ENCODE measurements at regions of chr21 and their contacts with region 1.

Region 1: GRCh38 chr21:32520875-32521735 is 64.2 kb downstream of the TCP10L start:
- DNase-seq: peak; percentile 98
- H3K4me3 ChIP-seq: no peak overlapping the region
- H3K27ac ChIP-seq: peak overlapping the region; percentile 100
- H3K4me1 ChIP-seq: peaks cover 71% of the 10 kb centered on the region
- H3K27me3 ChIP-seq: no peaks in the 10 kb centered on the region
- CTCF ChIP-seq: no peak
- POLR2A ChIP-seq: peak; percentile 59

Region 2: DNA sequence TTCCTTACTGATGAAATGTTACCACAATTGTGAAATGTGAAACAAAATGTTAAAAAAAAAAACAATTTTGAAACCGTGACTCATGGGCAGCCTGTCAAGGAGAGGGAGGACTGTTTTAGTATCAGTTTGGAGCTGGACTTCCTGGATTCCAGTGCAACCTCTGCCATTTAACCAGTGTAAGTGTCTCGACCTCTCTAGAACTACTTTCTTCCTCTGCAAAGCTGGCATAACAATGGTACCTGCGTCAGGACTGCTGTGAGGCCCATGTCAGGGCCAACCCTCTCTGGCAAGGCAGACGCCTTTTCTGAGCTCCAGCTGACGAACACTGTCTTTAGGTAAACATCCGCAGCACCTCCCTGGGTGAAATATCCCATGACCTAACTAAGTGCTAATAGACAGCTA is 149.2 kb before region 1 on chr21:
- CTCF ChIA-PET with region 1: interaction called, 3 read pairs
- POLR2A ChIA-PET with region 1: no interaction called
- dilution Hi-C with region 1: no loop called
- intact Hi-C with region 1: loop called (anchors 1 kb)
- DNase-seq: peak; percentile 98
- H3K4me3 ChIP-seq: no peak overlapping the region
- H3K27ac ChIP-seq: peak overlapping the region; percentile 93
- H3K4me1 ChIP-seq: peaks cover 29% of the 10 kb centered on the region
- H3K27me3 ChIP-seq: no peaks in the 10 kb centered on the region
- CTCF ChIP-seq: no peak
- POLR2A ChIP-seq: peak; percentile 43

Region 3: DNA sequence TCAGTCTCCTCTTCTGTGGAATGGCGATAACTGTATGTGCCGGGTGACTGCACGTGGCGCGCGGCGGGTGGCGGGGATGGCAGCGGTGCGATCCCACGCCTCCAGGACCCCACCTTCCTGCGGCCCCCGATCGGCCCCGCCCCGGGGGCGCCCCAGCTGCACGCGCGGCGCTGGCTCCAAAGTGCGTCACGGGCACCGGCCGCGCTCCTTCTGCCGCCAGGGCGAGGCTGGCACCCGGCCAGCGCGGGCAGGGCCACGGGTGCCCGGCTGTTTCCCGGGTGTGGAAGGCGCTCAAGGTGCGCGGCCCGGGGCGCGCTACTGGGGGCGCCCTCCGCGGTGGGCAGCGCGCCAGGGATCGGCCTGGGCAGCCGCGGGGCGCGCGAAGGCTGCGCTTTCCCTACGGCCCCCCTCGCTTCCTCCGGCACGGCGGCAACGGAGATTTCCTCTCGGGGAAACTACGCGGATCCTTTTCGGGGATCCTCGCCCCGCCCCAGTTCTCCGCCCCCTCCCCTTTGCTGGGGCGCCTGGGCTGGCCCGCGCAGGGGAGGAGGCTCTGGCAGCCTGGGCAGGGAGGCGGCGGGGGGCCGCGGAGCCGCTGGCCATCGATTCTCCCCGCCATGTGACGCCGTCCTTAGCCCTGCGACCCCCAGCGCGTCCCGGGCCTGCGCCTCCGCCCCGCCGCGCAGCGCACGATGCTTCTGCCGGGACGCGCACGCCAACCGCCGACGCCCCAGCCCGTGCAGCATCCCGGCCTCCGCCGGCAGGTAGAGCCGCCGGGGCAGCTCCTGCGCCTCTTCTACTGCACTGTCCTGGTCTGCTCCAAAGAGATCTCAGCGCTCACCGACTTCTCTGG is 108.7 kb before region 1 on chr21 and contains the start of gene EVA1C:
- CTCF ChIA-PET with region 1: interaction called, 35 read pairs
- POLR2A ChIA-PET with region 1: no interaction called
- dilution Hi-C with region 1: no loop called
- intact Hi-C with region 1: loop called (anchors 1 kb)
- DNase-seq: peak; percentile 69
- H3K4me3 ChIP-seq: peak within 1 kb of the TSS; percentile 46 to 81 (median 73)
- H3K27ac ChIP-seq: peak within 1 kb of the TSS; percentile 99
- H3K4me1 ChIP-seq: peaks cover 35% of the 10 kb centered on the region
- H3K27me3 ChIP-seq: no peaks in the 10 kb centered on the region
- CTCF ChIP-seq: peak in 1 of 2 donors; percentile 11
- POLR2A ChIP-seq: no peak
- total RNA-seq, gene EVA1C: 31.7 and 38.6 TPM in 2 replicates

Region 4: GRCh38 chr21:32475164-32475812 is 45.8 kb before region 1 on chr21:
- CTCF ChIA-PET with region 1: interaction called, 6 read pairs
- POLR2A ChIA-PET with region 1: interaction called, 3 read pairs
- dilution Hi-C with region 1: no loop called
- intact Hi-C with region 1: loop called (anchors 1 kb)
- DNase-seq: peak; percentile 86
- H3K4me3 ChIP-seq: peak overlapping the region in 1 of 3 experiments; percentile 36
- H3K27ac ChIP-seq: peak overlapping the region; percentile 66
- H3K4me1 ChIP-seq: peaks cover 46% of the 10 kb centered on the region
- H3K27me3 ChIP-seq: no peaks in the 10 kb centered on the region
- CTCF ChIP-seq: no peak
- POLR2A ChIP-seq: no peak

Region 5: GRCh38 chr21:32545948-32546441 is 24.9 kb after region 1 on chr21:
- CTCF ChIA-PET with region 1: interaction called, 5 read pairs
- POLR2A ChIA-PET with region 1: interaction called, 4 read pairs
- dilution Hi-C with region 1: no loop called
- intact Hi-C with region 1: loop called (anchors 1 kb)
- DNase-seq: peak; percentile 38
- H3K4me3 ChIP-seq: no peak overlapping the region
- H3K27ac ChIP-seq: peak overlapping the region; percentile 96
- H3K4me1 ChIP-seq: peaks cover 22% of the 10 kb centered on the region
- H3K27me3 ChIP-seq: no peaks in the 10 kb centered on the region
- CTCF ChIP-seq: no peak
- POLR2A ChIP-seq: no peak

Region 6: GRCh38 chr21:32569261-32570230 is 48.4 kb after region 1 on chr21:
- CTCF ChIA-PET with region 1: interaction called, 12 read pairs
- POLR2A ChIA-PET with region 1: interaction called, 3 read pairs
- dilution Hi-C with region 1: no loop called
- intact Hi-C with region 1: loop called (anchors 1 kb)
- DNase-seq: peak; percentile 87
- H3K4me3 ChIP-seq: peak overlapping the region; percentile 38 to 71 (median 62)
- H3K27ac ChIP-seq: peak overlapping the region; percentile 79
- H3K4me1 ChIP-seq: peaks cover 11% of the 10 kb centered on the region
- H3K27me3 ChIP-seq: no peaks in the 10 kb centered on the region
- CTCF ChIP-seq: peak; percentile 85 to 90
- POLR2A ChIP-seq: peak; percentile 66

Region 7: DNA sequence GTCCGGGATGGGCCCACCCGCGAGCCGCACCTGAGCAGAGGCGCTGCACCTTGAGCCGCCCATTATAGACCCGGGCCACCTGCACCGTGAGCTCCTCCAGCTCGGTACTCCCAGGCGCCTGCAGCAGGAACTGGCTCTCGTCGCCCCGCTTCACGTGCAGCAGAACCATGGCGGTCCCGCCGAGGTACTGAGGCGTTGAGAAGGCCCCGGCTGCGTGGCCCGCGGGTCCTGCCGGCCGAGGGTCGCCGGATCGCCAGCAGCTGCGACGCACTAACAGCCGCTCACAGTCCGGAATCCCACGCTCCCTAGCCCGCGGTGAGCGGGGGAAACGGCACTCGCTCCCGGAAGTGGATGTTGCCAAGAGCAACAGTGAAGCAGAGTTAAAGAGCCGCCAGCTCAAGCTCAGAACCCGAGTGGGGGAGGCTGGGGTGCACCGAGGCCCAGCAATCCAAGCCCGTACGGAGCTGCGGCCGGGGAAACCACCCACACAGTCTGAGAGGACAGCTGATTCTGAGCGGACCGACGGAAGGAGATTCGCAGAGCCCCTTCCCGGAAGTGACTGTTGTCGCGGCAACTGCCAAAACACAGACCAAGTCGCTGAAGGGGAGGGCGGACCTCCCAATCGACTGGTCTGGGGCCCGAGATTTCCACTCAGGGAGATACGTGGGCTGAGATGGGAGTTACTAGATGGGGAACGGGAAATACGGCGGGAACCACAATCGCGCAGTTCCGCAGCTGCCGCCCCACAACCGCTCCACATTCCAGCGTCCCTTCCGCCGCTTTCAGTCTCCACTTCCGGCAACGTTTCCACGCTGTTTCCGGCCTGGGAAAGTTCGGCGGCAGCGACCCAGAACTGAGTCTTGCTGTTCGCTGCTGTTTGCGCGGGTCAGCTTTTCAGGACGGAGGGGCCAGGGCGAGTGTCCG is 91.2 kb after region 1 on chr21 and contains the start of gene CFAP298:
- CTCF ChIA-PET with region 1: no interaction called
- POLR2A ChIA-PET with region 1: no interaction called
- dilution Hi-C with region 1: no loop called
- intact Hi-C with region 1: loop called (anchors 1 kb)
- DNase-seq: peak; percentile 92
- H3K4me3 ChIP-seq: peak within 1 kb of the TSS; percentile 74 to 99 (median 95)
- H3K27ac ChIP-seq: peak within 1 kb of the TSS; percentile 79
- H3K4me1 ChIP-seq: peaks cover 10% of the 10 kb centered on the region
- H3K27me3 ChIP-seq: no peaks in the 10 kb centered on the region
- CTCF ChIP-seq: no peak
- POLR2A ChIP-seq: peak; percentile 91
- total RNA-seq, gene CFAP298: 36.0 and 44.1 TPM in 2 replicates